GM13977 (cell line): ENCODE measurements at regions of chr14 and their contacts with region 1.

Region 1: DNA sequence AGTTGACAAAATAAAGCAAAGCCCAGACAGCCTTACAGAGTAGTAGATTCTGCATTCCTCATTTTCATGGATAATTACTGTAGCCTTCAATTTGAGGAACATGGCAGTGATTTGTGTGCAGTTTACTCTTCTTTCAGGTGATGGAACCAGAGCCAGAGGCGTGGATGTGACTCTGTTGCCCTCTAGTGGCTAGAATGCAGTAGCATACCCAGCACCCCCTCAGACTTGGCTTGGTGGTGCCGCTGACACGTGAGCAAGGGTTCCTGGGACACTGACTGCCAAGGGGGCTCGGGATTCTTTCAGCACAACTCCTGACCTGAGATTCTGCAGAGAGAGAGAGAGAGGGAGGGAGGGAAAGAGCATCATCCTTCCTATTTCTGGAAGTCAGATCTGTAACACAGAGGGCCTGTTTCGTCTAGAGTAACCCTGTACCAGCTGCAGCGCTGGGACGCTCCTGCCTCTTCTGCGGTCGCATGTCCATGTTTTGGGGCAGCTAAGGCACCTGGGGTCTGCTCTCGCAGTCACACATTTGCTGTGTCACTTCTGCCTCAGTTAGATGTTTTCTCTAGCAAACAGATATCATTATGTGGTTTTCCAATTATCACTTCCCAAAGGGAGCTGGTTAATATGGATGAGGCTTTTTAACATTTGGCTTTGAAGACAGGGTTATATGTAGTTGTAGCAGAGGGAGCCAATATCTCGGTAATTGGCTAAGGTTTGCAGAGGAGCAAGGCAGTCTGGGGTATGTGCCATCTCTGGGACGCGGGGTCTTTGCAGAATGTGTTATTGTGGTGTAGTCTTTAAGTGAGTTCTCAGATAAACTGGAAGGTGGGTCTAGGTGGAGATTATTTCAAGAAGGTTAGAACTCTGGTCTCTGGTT is 428.1 kb downstream of the NRXN3 start:
- DNase-seq: peak; percentile 67
- CTCF ChIP-seq: peak; percentile 94

Region 2: DNA sequence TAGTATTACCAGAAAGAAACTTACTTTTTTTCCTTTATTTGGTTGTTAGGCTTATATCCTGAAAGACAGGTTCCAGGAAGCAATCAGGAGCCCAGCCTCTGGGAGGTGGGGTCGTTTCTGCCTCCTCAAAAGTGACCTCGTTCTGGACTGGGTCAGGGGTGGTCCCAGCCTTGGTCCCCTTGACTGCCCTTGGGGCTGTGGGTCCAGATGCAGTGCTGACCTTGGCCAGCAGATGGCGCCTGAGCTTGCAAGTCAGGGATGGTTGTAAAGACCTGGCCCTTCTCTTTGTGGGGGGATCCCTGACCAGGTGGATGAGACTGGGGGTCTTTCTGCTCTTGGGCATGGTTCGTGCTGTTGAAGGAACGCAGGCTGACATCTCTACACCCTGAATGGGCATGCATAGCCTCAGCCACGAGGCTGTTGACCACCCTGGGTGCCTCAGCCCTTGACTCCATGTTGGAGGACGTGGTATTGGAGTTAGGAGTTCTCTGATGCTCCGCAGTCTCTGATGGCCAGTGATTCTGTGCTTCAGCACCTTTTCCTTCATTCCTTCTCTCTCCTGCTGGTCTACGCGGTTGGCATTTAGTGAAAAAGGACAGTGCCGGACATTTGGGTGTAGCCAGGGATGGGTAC is 736.0 kb before region 1 on chr14:
- in situ Hi-C with region 1: loop called (anchors 25 kb)
- DNase-seq: peak; percentile 81
- CTCF ChIP-seq: peak; percentile 99

Region 3: GRCh38 chr14:78071016-78071549 is 527.2 kb before region 1 on chr14:
- in situ Hi-C with region 1: no loop called
- DNase-seq: no peak
- CTCF ChIP-seq: no peak

Region 4: DNA sequence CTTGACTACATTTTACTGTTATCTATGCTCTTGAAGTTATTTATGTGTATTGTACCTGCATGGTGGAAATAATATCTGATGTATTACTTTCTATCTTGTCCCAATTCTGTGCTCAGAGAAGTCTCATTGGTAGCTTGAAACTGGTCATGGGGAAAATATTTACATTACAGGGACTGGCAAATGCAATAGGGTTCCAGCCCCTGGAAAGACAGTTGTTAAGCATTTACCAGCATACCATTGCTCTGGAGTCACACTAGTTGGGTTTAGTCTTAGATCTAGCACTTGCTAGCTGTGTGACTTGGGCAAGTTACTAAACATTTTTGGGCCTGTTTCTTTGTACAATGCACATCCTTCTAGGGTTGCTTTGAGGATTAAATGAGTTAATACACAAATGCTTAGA is 514.4 kb before region 1 on chr14:
- in situ Hi-C with region 1: no loop called
- DNase-seq: no peak
- CTCF ChIP-seq: no peak

Region 5: DNA sequence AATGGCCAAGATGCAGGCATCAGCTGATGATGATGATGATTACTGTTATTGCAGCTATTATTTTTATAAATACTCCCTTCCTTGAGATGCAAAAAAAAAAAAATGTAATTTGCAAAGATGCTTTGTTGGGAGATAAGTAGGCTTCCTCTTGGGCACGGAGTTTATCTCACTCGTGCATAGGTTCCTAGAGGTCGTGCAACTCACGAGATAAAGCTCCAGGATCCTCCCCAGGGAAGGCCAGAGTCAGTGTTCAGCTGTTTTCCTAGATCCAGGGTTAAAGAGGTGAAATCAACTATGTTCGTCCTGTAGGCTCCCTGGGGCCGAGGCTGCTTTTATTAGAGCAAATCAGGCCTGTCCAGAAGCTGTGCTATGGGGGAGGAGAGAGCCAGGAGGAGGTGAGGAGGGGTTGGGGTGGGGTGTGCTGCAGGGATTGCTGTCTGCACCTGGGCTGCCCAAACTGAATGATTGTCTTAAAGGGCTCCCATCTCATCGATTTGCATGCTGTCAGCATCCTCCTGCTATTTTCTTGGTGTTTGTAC is 157.9 kb before region 1 on chr14:
- in situ Hi-C with region 1: no loop called
- DNase-seq: no peak
- CTCF ChIP-seq: no peak

Region 6: GRCh38 chr14:78764240-78764639 is 166.0 kb after region 1 on chr14:
- in situ Hi-C with region 1: no loop called
- DNase-seq: no peak
- CTCF ChIP-seq: no peak